Prostate gland (tissue), 2 donors: ENCODE measurements at regions of chr14 and their contacts with region 1.

Region 1: GRCh38 chr14:63044994-63045611 is at the start of gene KCNH5:
- DNase-seq: peak; percentile 13
- H3K4me3 ChIP-seq: peak within 1 kb of the TSS; percentile 19 to 24
- H3K27ac ChIP-seq: no peak within 1 kb of the TSS
- H3K4me1 ChIP-seq: peaks cover 10% of the 10 kb centered on the region
- H3K27me3 ChIP-seq: peaks cover 8% of the 10 kb centered on the region
- CTCF ChIP-seq: no peak
- POLR2A ChIP-seq: no peak
- total RNA-seq, gene KCNH5: 0.06 to 0.09 TPM

Region 2: GRCh38 chr14:62179367-62180018 is 865.6 kb before region 1 on chr14:
- intact Hi-C with region 1: loop called (anchors 5 kb)
- DNase-seq: peak; percentile 73
- H3K4me3 ChIP-seq: no peak overlapping the region
- H3K27ac ChIP-seq: no peak overlapping the region
- H3K4me1 ChIP-seq: no peaks in the 10 kb centered on the region
- H3K27me3 ChIP-seq: no peaks in the 10 kb centered on the region
- CTCF ChIP-seq: peak in 3 of 4 experiments; percentile 58 to 73 (median 63)
- POLR2A ChIP-seq: no peak

Region 3: DNA sequence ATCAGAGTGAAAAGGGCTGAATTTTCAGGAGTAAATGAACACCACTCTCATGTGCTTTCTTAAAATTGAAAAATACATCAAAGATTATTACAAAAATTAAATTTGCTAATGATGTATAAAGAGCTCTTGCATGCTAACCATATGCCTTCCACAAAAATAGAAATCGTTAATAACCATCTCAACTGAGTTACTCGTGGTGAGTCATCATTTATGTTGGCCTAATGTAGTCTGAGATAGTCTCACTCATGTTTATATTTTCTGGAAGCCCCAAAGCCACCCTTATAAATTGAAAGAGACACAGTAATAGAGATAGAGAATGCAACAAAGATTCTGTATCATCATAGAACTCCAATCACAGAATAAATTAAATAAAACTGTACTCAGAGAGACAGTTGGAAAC is 131.1 kb before region 1 on chr14:
- intact Hi-C with region 1: no loop called
- DNase-seq: no peak
- H3K4me3 ChIP-seq: no peak overlapping the region
- H3K27ac ChIP-seq: no peak overlapping the region
- H3K4me1 ChIP-seq: no peaks in the 10 kb centered on the region
- H3K27me3 ChIP-seq: no peaks in the 10 kb centered on the region
- CTCF ChIP-seq: no peak
- POLR2A ChIP-seq: no peak